Uterus (tissue), 4 donors: ENCODE measurements at regions of chr17 and their contacts with region 1.

Region 1: DNA sequence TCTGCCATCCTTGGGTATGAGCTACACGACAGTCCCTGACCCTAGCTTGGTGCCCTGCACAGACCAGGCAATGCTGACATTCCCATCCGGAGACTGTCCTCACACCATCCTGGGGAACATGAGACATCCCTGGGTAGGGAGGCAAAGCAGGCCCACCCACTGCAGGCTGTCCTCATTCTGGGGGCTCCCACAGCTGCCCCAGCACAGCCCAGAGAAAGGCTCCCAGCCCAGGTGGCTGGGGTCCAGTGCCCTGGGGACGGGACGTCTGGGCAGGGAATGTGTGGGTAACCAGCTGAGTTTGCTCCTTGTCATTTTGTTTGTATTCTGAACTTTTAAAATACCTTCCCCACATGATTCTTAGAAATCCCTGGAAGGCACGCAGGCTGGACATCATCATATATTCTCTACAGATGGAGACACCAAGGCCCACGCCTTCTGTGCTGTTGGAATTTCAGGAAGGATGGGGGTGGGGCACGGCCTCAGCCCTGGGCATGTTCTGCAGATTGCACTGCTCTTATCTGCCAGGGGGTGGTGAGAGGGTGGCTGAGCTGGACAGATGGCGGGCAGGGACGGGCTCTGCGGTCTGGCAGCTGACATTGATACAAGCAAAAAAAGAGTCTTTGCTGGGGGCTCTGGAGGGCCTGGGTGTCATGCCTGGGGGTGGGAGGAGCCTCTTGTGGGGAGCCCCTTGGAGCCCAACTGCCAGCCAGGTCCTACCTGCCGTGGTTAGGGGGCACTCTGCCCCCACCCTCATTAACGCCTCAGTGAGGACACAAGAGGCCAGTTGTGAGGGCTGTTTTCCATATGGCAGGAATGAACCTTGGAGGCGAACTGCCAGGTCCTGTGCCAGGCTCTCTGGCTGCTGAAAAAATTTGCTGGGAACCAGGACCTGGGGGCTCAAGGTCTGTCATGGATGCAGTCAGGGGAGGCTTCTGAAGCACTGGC is 28.4 kb downstream of the LRRC75A start:
- DNase-seq: no peak
- H3K4me3 ChIP-seq: no peak overlapping the region
- H3K27ac ChIP-seq: peak overlapping the region in 1 of 2 donors; percentile 1
- H3K4me1 ChIP-seq: no peaks in the 10 kb centered on the region
- H3K27me3 ChIP-seq: no peaks in the 10 kb centered on the region
- CTCF ChIP-seq: no peak
- POLR2A ChIP-seq: no peak

Region 2: GRCh38 chr17:16504984-16505383 is 41.4 kb after region 1 on chr17:
- intact Hi-C with region 1: loop called (anchors 5 kb)
- DNase-seq: no peak
- H3K4me3 ChIP-seq: no peak overlapping the region
- H3K27ac ChIP-seq: no peak overlapping the region
- H3K4me1 ChIP-seq: no peaks in the 10 kb centered on the region
- H3K27me3 ChIP-seq: no peaks in the 10 kb centered on the region
- CTCF ChIP-seq: no peak
- POLR2A ChIP-seq: no peak

Region 3: GRCh38 chr17:16623282-16623681 is 159.7 kb after region 1 on chr17:
- intact Hi-C with region 1: no loop called
- DNase-seq: no peak
- H3K4me3 ChIP-seq: no peak overlapping the region
- H3K27ac ChIP-seq: no peak overlapping the region
- H3K4me1 ChIP-seq: no peaks in the 10 kb centered on the region
- H3K27me3 ChIP-seq: peaks cover 0 to 3% of the 10 kb centered on the region in 2 donors
- CTCF ChIP-seq: no peak
- POLR2A ChIP-seq: no peak